Activated T-helper 2 cell treated with anti-CD3 and anti-CD28 coated beads, Interferon-gamma antibody, Interleukin-2, Interleukin-4, amounts not matched to agents 10 μg/mL and 5 μg/mL and 100 μg/mL, durations not matched to agents 14 hours and 24 hours and 36 hours (primary cell): ENCODE measurements at regions of chr16 and their contacts with region 1.

Region 1: DNA sequence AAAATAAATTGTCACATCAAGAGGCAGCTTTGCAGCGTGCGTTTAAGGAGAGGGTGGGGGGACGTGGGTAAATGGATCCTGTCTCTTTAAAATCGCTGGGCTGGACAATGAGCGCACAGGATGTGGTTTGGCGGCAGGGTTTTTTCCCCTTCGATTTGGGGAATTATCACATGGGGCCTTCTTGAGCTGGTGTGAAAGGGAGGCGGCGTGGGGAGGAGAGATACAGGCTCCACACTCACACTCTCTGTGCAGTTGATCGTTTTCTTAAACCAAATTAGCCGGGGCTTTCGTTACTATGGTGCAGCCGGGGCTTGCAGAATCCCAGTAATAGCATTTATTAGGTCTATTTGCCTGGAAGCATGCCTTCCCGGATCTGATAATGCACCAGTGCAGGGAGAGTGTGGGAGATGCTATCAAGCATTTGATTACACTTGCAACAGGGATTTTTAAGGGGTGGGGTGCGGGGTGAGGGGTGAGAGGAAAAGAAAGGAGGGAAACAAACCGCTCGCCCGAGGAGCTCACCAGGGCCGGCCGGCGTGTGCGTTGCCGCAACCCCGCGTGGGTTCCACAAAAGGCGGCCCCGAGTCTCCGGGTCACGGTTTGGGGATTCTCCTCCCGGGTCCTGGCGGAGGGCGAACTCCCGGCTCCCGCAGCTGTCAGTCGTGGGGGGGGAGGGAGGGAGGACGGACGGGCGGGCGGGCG is 58.9 kb upstream of the GSE1 start:
- DNase-seq: peak; percentile 78
- H3K4me3 Mint-ChIP-seq: peak overlapping the region; percentile 91
- H3K27ac Mint-ChIP-seq: peak overlapping the region; percentile 96
- H3K4me1 Mint-ChIP-seq: peaks cover 34% of the 10 kb centered on the region
- H3K27me3 Mint-ChIP-seq: no peaks in the 10 kb centered on the region

Region 2: GRCh38 chr16:85305996-85306792 is 248.1 kb before region 1 on chr16:
- intact Hi-C with region 1: loop called (anchors 5 kb)
- DNase-seq: peak; percentile 85
- H3K4me3 Mint-ChIP-seq: peak overlapping the region; percentile 66
- H3K27ac Mint-ChIP-seq: peak overlapping the region; percentile 93
- H3K4me1 Mint-ChIP-seq: peaks cover 41% of the 10 kb centered on the region
- H3K27me3 Mint-ChIP-seq: peaks cover 2% of the 10 kb centered on the region

Region 3: DNA sequence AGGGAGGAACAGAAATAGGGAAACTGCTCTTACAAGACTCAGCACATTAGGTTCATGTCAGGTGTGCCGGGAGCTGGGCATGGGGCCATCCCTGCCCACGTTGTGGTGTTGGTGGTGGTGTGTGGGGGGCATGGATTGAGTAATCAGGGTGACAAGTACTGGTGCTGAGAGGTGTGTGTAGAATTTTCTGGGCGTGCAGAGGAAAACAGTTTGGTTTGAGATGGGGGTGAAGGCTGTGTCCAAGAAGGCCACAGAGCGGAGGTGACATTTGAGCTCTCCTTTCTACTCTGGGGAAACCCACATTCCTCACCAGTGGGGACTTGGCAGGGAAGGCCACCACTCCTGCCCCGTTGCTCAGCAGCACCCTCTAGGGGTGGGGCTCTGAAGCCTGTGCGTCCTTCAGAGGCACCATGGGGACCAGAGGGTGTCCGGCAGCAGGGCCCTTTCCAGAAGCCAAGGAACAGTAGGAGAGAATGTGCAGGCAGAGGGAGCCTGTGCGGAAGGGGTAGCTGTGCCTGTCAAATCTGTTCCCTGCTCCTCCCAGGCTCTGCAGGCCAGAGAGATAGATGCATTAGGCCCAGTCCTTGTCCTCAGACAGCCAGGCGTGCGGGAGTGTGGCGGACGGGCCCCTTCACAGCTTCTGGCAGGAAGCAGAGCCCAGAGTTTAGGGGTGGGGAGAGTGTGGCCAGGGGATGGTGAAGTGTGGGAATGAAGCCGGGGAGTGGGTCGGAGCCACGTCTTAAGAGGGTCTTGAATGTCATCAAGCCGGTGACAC is 10.2 kb after region 1 on chr16:
- intact Hi-C with region 1: loop called (anchors 1 kb)
- DNase-seq: no peak
- H3K4me3 Mint-ChIP-seq: no peak overlapping the region
- H3K27ac Mint-ChIP-seq: no peak overlapping the region
- H3K4me1 Mint-ChIP-seq: peaks cover 34% of the 10 kb centered on the region
- H3K27me3 Mint-ChIP-seq: no peaks in the 10 kb centered on the region

Region 4: DNA sequence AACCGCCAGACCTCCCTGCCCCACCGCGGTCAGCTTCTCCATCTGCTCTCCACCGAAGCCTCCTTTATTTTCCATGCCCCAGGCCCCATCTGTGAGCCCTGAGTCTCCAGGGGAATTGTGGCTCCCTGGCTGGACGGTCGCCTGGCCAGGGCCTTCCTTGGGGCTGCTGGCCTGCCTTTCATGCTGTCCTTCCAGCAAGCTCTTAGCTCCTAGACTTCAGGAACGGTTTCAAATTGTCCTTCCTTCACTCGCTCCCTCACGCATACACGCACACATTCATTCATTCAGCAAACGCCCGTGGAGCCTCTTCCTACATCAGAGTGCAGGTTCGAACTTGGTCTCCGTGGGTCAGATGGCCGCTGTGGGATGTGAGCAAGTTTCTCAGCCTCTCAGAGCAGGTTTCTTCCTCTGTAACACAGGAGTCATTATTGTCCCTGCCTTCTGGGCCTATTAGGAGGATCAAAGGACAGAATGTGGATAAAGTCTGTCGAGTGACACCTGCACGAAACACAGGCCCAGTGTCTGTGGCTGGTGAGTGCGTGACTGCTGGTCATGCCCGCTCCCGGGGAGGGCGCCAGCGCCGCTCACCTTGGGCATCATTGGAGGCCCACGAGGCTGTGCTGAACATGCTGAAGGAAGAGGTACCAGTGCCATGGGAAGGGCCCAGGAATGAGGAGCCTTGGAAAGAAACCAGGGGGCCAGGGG is 40.2 kb after region 1 on chr16:
- intact Hi-C with region 1: no loop called
- DNase-seq: no peak
- H3K4me3 Mint-ChIP-seq: no peak overlapping the region
- H3K27ac Mint-ChIP-seq: no peak overlapping the region
- H3K4me1 Mint-ChIP-seq: peaks cover 4% of the 10 kb centered on the region
- H3K27me3 Mint-ChIP-seq: no peaks in the 10 kb centered on the region

Region 5: DNA sequence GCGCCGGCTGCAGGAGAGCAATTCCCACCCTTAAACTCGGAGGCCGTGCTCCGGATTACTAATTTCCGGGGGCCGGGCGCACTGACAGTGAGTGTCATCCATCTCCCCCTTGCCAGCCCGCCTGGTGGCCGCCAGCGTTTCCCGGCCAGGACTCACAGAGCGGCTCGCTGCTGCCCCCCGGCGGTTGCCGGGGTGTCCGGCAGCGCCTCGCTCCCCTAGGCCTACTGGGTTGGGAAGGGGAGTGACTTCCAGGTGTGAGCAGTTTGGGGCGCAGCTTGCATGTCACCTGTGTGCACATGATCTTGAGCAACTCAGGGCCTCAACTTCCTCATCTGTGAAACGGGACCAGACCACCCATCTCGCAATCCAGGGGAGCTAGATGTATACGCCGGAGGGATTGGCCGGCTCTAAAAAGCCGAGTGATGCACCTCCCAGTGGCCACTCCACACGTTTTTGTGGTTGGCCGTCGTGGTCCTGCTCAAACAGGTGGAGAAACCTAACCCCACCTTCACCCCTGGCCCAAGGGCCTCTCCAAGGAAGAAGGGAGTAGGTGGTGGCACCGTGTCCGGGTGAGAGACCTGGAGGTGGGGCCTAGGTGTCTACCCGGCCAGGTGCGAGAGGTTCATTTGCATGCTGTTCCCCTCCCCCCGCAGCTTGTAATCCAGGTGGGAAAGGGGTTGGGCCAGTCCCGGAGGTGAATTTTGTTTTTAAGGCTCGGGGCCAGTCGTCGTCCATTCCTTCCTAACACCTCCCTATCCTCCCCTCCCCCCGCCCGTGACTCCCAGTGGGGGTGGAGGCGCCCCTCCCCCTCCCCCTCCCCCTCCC is 56.5 kb after region 1 on chr16:
- intact Hi-C with region 1: loop called (anchors 1 kb)
- DNase-seq: peak; percentile 82
- H3K4me3 Mint-ChIP-seq: peak overlapping the region; percentile 77
- H3K27ac Mint-ChIP-seq: peak overlapping the region; percentile 49
- H3K4me1 Mint-ChIP-seq: peaks cover 23% of the 10 kb centered on the region
- H3K27me3 Mint-ChIP-seq: peaks cover 1% of the 10 kb centered on the region